Heart right ventricle (tissue), 16 donors: ENCODE measurements at regions of chr18 and their contacts with region 1.

Region 1: DNA sequence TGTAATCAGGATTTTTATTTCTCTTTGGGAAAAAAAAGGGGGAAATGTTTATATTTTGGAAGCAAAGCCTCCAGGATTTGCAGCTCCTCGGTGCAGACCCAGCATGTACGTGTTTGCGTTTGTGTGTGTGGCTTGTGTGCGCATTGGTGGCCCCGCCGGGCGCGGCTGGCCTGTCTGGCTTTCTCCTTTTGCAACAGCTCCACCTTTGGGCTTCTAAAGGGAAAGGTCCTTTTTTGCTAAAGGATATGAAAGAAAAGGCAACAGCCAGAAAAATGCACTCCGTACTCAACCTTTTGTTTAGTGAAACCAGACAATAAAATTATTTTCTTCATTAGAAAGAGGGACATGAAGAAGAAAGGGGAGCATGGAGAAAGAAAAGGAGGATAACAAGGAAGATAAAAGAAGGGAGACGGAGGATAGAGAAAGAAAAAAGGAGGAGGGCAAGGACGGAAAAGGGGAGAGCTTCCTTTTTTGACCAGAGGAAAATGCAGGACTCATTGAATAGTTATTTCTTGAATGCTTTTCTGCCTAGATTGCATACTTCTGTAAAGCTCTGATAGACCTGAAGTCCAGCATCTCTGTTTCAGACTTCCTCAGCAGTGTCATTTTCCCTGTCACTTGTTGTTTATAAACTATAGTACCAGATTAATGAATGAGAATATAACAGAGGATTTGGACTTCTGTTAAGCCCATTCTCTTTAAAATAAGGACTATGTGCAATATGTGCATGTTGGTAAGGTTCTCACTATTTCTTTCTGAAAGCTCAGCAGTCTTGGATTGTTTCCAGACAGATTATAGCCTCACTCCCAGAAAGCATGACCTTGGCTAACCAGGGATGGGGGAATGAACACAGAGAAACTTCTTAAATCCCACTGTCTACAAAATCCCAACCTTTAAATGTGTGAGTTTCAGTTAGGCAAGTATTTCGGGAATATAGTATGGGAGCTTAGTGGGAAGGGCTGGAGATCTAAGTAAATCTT is 563.1 kb upstream of the PIK3C3 start:
- DNase-seq: peak; percentile 12 to 54
- ATAC-seq: peak in 5 of 8 donors; percentile 56 to 78 (median 71)
- H3K4me3 ChIP-seq: peak overlapping the region in 6 of 10 donors; percentile 16 to 31 (median 26)
- H3K27ac ChIP-seq: no peak overlapping the region
- H3K4me1 ChIP-seq: peaks cover 0 to 5% (median 0%) of the 10 kb centered on the region in 9 donors
- H3K27me3 ChIP-seq: no peaks in the 10 kb centered on the region
- CTCF ChIP-seq: peak; percentile 39 to 64 (median 55)

Region 2: GRCh38 chr18:41745166-41746049 is 353.5 kb after region 1 on chr18:
- intact Hi-C with region 1: loop called in 1 of 10 experiments (anchors 10 kb)
- DNase-seq: peak; percentile 23 to 31
- ATAC-seq: peak in 7 of 8 donors; percentile 48 to 81 (median 74)
- H3K4me3 ChIP-seq: no peak overlapping the region
- H3K27ac ChIP-seq: no peak overlapping the region
- H3K4me1 ChIP-seq: peaks cover 0 to 3% (median 0%) of the 10 kb centered on the region in 9 donors
- H3K27me3 ChIP-seq: no peaks in the 10 kb centered on the region
- CTCF ChIP-seq: peak; percentile 31 to 73 (median 59)